K562 (cell line): ENCODE measurements at regions of chr4 and their contacts with region 1.

Region 1: DNA sequence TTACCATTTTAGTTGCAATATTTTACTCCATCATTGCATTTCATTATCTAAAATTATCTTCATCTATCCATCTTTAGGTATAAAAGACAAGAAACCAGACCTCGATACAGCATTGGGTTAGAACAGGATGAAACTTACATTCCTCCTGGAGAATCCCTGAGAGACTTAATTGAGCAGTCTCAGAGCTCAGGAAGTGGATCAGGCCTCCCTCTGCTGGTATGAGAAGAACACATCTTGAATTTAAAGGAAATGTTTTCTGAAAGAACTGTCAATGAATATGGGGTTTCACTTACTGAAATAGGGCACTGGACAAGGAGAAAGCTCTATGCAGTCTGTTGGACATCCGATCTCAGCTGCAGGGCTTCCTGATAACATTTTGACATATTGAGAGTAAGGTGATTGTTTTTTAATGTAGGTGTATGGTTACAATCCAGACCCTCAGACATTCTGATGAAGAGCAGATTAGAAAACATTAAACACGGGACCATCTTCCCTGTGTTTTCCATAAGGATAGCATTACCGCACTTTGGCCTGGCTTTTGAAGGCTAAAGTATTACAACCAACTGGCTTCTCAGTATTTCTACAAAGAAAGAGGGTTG is 367.2 kb downstream of the BMPR1B start:
- DNase-seq: peak in 3 of 4 experiments; percentile 9 to 44 (median 23)
- ATAC-seq: peak; percentile 75
- H3K4me3 ChIP-seq: no peak overlapping the region
- H3K27ac ChIP-seq: no peak overlapping the region
- H3K4me1 ChIP-seq: no peaks in the 10 kb centered on the region
- H3K27me3 ChIP-seq: no peaks in the 10 kb centered on the region
- CTCF ChIP-seq: peak; percentile 23 to 56 (median 48); a peak in 5 of 6 replicates
- EP300 ChIP-seq: no peak
- POLR2A ChIP-seq: no peak
- RAD21 ChIP-seq: peak; percentile 40 to 54; a peak in 3 of 4 replicates

Region 2: GRCh38 chr4:94629837-94630236 is 495.2 kb before region 1 on chr4:
- CTCF ChIA-PET with region 1: no interaction called
- POLR2A ChIA-PET with region 1: no interaction called
- in situ Hi-C with region 1: loop called (anchors 25 kb)
- intact Hi-C with region 1: loop called (anchors 5 kb)
- DNase-seq: no peak
- ATAC-seq: no peak
- H3K4me3 ChIP-seq: no peak overlapping the region
- H3K27ac ChIP-seq: no peak overlapping the region
- H3K4me1 ChIP-seq: no peaks in the 10 kb centered on the region
- H3K27me3 ChIP-seq: no peaks in the 10 kb centered on the region
- CTCF ChIP-seq: no peak
- EP300 ChIP-seq: no peak
- POLR2A ChIP-seq: no peak
- RAD21 ChIP-seq: no peak

Region 3: DNA sequence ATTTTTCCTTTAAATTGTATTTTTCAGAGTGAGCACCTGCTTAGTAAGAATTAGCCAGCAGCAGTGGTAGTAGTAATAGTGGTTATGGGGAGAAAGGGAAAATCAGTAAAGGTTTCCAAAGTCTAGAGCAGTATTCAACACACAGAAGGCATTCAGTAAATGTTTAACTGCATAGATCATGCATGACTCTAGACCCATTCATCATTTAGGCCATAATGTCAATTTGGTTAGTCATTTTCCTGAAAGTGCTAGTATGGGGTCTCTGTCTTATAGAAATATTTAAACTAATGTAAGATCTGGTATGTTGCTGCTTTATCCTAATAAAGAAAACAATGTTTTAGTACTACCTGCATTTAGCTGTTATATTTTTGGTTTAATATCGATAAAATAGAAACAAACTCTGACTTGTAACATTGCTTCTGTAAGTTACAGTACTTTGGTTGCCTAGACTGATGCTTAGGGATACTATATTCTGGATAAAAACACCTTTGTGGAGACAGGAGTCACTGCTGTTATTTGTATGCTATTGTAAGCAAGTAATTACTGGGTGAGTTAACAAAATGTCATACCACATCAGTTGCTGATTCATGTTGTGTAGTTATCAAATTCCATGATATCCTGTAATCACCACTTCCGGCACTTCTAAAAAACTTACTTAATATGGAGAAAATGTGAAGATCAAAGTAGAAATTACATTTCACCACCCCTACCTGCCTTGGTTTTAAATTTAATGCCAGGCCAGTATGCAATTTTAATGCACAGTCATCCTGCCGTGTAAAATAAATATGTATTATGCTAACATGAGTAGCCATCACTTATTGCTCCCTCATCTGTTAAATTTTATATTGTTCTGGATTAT is 483.1 kb before region 1 on chr4:
- CTCF ChIA-PET with region 1: no interaction called
- POLR2A ChIA-PET with region 1: no interaction called
- in situ Hi-C with region 1: loop called (anchors 25 kb)
- intact Hi-C with region 1: no loop called
- DNase-seq: no peak
- ATAC-seq: no peak
- H3K4me3 ChIP-seq: no peak overlapping the region
- H3K27ac ChIP-seq: no peak overlapping the region
- H3K4me1 ChIP-seq: no peaks in the 10 kb centered on the region
- H3K27me3 ChIP-seq: no peaks in the 10 kb centered on the region
- CTCF ChIP-seq: no peak
- EP300 ChIP-seq: no peak
- POLR2A ChIP-seq: no peak
- RAD21 ChIP-seq: no peak

Region 4: DNA sequence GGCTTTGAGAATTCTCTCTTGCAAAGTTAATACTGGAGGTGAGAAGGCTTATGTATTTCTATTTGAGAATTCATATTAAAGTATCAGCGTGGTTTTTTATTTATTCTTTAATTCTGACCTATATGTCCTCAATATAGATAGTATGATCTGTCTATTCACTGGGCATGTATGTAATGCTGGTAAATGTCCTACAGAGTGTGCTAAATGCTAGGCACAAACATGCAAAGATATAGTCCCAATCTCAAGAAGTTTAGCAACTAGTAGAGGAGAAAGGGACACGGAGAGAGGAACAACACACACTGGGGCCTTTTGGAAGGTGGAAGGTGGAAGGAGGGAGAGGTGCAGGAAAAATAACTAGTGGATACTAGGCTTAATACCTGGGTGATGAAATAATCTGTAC is 378.3 kb before region 1 on chr4:
- CTCF ChIA-PET with region 1: no interaction called
- POLR2A ChIA-PET with region 1: no interaction called
- in situ Hi-C with region 1: no loop called
- intact Hi-C with region 1: loop called (anchors 10 kb)
- DNase-seq: no peak
- ATAC-seq: no peak
- H3K4me3 ChIP-seq: no peak overlapping the region
- H3K27ac ChIP-seq: no peak overlapping the region
- H3K4me1 ChIP-seq: no peaks in the 10 kb centered on the region
- H3K27me3 ChIP-seq: no peaks in the 10 kb centered on the region
- CTCF ChIP-seq: peak in 2 of 3 experiments; percentile 21 to 30; a peak in 1 of 6 replicates
- EP300 ChIP-seq: no peak
- POLR2A ChIP-seq: no peak
- RAD21 ChIP-seq: peak in 1 of 2 experiments; percentile 18; a peak in 2 of 4 replicates